Calu3 (cell line): ENCODE measurements at regions of chr1 and their contacts with region 1.

Region 1: GRCh38 chr1:196651637-196652215 is at the start of gene CFH:
- DNase-seq: peak; percentile 10
- H3K4me3 Mint-ChIP-seq: peak within 1 kb of the TSS; percentile 56
- H3K27ac Mint-ChIP-seq: peak within 1 kb of the TSS; percentile 48
- H3K4me1 Mint-ChIP-seq: peaks cover 6% of the 10 kb centered on the region
- H3K27me3 Mint-ChIP-seq: no peaks in the 10 kb centered on the region
- CTCF ChIP-seq: no peak
- total RNA-seq, gene CFH: 26.1 and 43.9 TPM in 2 replicates

Region 2: DNA sequence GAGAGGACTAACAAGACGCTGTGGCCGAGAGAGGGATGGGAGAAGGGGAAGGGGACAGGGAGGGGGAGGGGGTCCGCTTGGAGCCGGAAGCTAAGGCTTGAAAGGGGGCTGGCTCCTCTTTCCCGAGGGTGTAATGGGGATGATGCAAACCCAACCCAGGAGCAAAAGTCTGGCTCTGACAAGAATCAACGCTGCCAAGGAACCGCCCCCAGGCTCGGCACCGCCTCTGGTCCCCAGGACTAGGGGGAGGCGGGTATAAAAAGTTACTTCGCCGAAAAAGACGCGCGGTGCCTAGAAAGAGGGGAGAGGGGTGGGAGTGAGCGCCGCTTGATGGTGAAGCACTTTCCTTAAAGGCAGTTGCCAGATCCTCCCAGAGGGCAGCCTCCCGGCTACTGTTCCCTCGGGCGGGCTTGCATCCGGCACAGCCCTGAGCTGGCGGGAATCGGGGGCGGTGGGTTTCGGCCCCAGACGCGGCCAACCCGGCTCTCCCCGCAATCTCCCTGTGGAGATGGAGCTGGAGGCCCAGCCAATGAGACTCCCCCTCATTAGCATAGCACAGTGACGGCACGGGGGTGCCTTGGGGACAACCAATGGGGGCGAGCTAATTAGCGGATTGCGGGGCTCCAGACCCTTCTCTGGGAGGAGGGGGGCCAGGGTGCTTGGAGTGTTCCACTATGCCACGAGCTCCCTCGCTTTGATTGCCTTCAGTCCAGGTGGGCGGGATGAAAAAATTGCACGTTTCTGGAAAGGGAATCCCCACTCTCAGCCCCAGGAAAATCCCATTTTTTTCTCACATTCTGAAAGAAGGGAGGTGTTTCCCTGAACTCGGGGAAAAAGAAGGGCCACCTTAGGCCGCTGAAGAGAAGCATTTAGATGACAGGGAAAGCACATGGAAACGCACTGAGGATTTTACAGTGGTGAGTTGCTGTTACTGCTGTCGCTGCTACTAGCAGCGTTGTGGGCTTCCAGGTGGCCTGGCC is 43.0 kb before region 1 on chr1 and contains the start of gene KCNT2:
- CTCF ChIA-PET with region 1: no interaction called
- intact Hi-C with region 1: loop called (anchors 2 kb)
- DNase-seq: peak; percentile 71
- H3K4me3 Mint-ChIP-seq: peak within 1 kb of the TSS; percentile 84
- H3K27ac Mint-ChIP-seq: peak within 1 kb of the TSS; percentile 70
- H3K4me1 Mint-ChIP-seq: peaks cover 17% of the 10 kb centered on the region
- H3K27me3 Mint-ChIP-seq: no peaks in the 10 kb centered on the region
- CTCF ChIP-seq: no peak
- total RNA-seq, gene KCNT2: 2.4 and 3.3 TPM in 2 replicates